ENCODE measurements at regions of chr17 and their contacts with region 1.

Region 1: GRCh38 chr17:19377602-19378392 is 501 bp upstream of the MAPK7 start:
- DNase-seq: peak; percentile 99 to 100 (median 99)
- ATAC-seq: peak; percentile 97 to 98
- H3K4me3 ChIP-seq: peak overlapping the region; percentile 63
- H3K27ac ChIP-seq: peak overlapping the region; percentile 98
- H3K4me1 ChIP-seq: no peaks in the 10 kb centered on the region
- H3K27me3 ChIP-seq: no peaks in the 10 kb centered on the region

Region 2: GRCh38 chr17:19494961-19495806 is 117.4 kb after region 1 on chr17:
- intact Hi-C with region 1: no loop called
- DNase-seq: no peak
- ATAC-seq: peak in 1 of 2 donors; percentile 28
- H3K4me3 ChIP-seq: no peak overlapping the region
- H3K27ac ChIP-seq: no peak overlapping the region
- H3K4me1 ChIP-seq: no peaks in the 10 kb centered on the region
- H3K27me3 ChIP-seq: no peaks in the 10 kb centered on the region

Region 3: GRCh38 chr17:19507775-19508576 is 130.2 kb after region 1 on chr17:
- intact Hi-C with region 1: loop called in 1 of 4 experiments (anchors 5 kb)
- DNase-seq: peak; percentile 85 to 94 (median 93)
- ATAC-seq: peak; percentile 93 to 95
- H3K4me3 ChIP-seq: peak overlapping the region; percentile 72
- H3K27ac ChIP-seq: peak overlapping the region; percentile 66
- H3K4me1 ChIP-seq: no peaks in the 10 kb centered on the region
- H3K27me3 ChIP-seq: no peaks in the 10 kb centered on the region